ENCODE measurements at regions of chr6 and their contacts with region 1.

Region 1: DNA sequence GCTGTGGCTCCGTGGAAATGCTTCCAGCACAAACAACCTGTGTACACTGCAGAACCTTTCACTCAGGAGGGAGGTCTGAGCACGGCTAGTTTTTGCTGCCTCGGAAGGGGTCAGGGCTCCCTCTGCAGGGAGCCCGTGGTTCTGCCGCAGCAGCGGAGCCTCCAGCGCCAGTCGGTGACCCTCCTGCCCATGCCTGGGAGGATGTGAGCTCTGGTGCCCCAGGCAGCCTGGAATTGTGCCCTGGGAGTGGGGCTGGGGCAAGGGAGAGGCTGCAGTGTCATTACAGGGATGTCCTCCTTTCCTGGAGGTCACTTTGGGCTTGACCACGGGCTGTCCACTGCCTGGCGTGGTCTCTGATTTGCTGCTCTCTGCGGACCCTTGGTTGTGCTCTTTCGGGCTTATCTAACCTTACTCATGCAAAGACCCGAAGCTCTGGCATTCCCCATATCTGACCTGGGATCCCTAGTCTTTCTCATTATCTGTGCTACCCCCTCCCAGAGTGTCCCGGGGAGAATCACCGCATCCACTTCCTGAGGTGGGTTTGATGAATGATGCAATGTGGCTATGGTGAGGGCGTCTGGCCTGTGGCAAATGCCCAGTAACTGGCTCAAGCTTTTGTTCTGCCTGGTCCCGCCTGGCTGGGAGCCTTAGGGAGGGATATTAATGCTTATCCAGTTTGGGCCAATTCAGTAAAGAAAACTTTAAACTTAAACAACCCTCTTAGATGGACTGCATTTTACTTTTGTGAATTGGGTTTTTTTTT is 59.6 kb upstream of the TAGAP start:
- DNase-seq: peak; percentile 87
- CTCF ChIP-seq: peak; percentile 85

Region 2: DNA sequence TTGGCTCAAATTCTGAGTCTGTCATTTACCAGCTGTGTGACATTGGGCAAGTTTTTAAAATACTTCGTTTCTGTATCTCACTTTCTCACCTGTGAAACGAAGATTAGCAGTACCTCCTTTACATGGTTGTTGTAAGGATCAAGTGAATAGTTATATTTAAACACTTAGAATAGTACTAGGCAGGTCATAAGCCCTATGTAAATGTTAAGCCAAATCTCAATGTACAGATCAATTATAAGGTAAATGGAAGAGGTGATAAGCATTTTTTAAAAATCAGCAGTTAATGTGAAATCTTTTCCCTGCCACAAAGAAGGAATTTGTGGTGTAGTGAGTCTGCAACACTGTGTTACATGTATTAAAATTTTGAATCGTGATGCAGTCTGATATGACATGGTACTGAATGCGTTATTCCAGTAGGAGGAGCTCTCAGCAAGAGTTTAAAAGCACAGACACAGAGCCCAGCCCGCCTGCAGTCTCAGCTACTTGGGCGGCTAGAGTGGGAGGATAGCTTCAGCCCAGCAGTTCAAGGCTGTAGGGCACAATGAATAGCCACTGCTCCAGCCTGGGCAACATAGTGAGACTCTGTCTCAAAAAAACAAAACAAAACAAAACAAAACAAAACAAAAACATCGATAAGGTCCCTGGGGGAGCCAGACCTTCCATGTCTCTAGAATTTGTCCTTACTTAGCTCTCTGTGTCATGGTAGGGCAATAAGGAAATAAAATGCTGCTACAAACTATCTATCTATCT is 890.2 kb before region 1 on chr6:
- in situ Hi-C with region 1: loop called (anchors 25 kb)
- DNase-seq: peak; percentile 80
- CTCF ChIP-seq: peak; percentile 87

Region 3: GRCh38 chr6:158704181-158704822 is 400.0 kb before region 1 on chr6:
- in situ Hi-C with region 1: loop called (anchors 25 kb)
- DNase-seq: peak; percentile 92
- CTCF ChIP-seq: peak; percentile 99

Region 4: GRCh38 chr6:158958504-158959386 is 145.6 kb before region 1 on chr6:
- in situ Hi-C with region 1: no loop called
- DNase-seq: no peak
- CTCF ChIP-seq: peak; percentile 16

Region 5: GRCh38 chr6:158999666-159000403 is 104.5 kb before region 1 on chr6 and contains the start of gene RSPH3:
- in situ Hi-C with region 1: loop called (anchors 10 kb)
- DNase-seq: peak; percentile 99
- CTCF ChIP-seq: no peak

Region 6: GRCh38 chr6:159042003-159042825 is 62.1 kb before region 1 on chr6:
- in situ Hi-C with region 1: loop called (anchors 10 kb)
- DNase-seq: peak; percentile 49
- CTCF ChIP-seq: peak; percentile 98

Measured in GM13976 (cell line).